ENCODE measurements at regions of chr9 and their contacts with region 1.

Region 1: GRCh38 chr9:133149126-133150107 is 14.3 kb downstream of the GBGT1 start:
- DNase-seq: peak; percentile 78 to 89 (median 81)
- H3K4me3 ChIP-seq: peak overlapping the region in 1 of 2 donors; percentile 67
- H3K4me3 Mint-ChIP-seq: peak overlapping the region; percentile 60 to 86 (median 80)
- H3K27ac ChIP-seq: peak overlapping the region; percentile 90
- H3K27ac Mint-ChIP-seq: peak overlapping the region; percentile 81 to 100 (median 87)
- H3K4me1 ChIP-seq: peaks cover 42% of the 10 kb centered on the region
- H3K4me1 Mint-ChIP-seq: peaks cover 14 to 43% (median 31%) of the 10 kb centered on the region in 4 donors
- H3K27me3 ChIP-seq: no peaks in the 10 kb centered on the region
- H3K27me3 Mint-ChIP-seq: no peaks in the 10 kb centered on the region

Region 2: GRCh38 chr9:132973713-132974112 is 175.7 kb before region 1 on chr9:
- CTCF ChIA-PET with region 1: interaction called, 3 read pairs
- POLR2A ChIA-PET with region 1: no interaction called
- intact Hi-C with region 1: loop called (anchors 2 kb)
- DNase-seq: peak in 1 of 5 donors; percentile 9
- H3K4me3 ChIP-seq: no peak overlapping the region
- H3K4me3 Mint-ChIP-seq: no peak overlapping the region
- H3K27ac ChIP-seq: no peak overlapping the region
- H3K27ac Mint-ChIP-seq: no peak overlapping the region
- H3K4me1 ChIP-seq: peaks cover 10% of the 10 kb centered on the region
- H3K4me1 Mint-ChIP-seq: peaks cover 4 to 11% (median 6%) of the 10 kb centered on the region in 4 donors
- H3K27me3 ChIP-seq: peaks cover 4% of the 10 kb centered on the region
- H3K27me3 Mint-ChIP-seq: peaks cover 15 to 25% of the 10 kb centered on the region in 2 donors

Region 3: DNA sequence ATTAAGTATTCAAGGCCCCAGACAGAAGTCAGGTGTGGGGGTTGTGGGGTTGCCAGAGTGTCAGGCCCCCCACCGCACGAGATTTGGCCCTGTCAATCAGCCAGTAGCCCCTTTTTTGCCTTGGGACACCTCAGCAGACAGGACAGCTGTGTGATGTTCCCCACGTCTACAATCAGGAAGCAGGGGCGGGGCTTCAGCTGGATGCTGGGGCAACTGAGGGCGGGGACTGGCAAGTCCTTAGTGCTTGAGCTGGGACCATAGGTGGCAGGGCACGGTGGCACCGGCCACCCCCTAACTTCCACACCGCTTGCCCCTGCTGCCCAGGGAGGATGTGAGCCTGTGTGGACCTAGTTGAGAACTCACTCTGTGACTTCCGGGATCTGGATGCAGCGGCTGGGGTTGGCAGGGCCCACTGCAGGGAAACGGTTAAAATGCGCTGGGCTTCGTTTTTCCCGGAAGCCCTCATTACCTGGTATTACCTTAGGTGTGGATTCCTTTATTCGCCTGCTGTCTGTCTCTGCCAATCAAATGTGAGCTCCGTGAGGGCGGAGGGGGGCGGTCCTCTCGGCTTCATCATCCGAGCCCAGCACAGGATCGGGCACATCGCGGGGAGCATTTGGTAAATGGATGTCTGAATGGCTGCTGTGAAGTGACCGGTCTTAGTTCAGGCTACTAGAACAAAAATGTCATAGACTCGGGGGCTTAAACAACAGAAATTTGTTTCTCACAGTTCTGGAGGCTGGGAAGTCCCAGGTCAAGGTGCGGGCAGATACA is 126.1 kb before region 1 on chr9:
- CTCF ChIA-PET with region 1: interaction called, 23 read pairs
- POLR2A ChIA-PET with region 1: interaction called, 8 read pairs
- intact Hi-C with region 1: loop called (anchors 1 kb)
- DNase-seq: peak in 4 of 5 donors; percentile 7 to 58 (median 14)
- H3K4me3 ChIP-seq: no peak overlapping the region
- H3K4me3 Mint-ChIP-seq: peak overlapping the region in 1 of 8 donors; percentile 54
- H3K27ac ChIP-seq: no peak overlapping the region
- H3K27ac Mint-ChIP-seq: peak overlapping the region in 2 of 7 donors; percentile 3 to 17
- H3K4me1 ChIP-seq: peaks cover 15% of the 10 kb centered on the region
- H3K4me1 Mint-ChIP-seq: peaks cover 4 to 22% (median 16%) of the 10 kb centered on the region in 4 donors
- H3K27me3 ChIP-seq: no peaks in the 10 kb centered on the region
- H3K27me3 Mint-ChIP-seq: peaks cover 1 to 3% of the 10 kb centered on the region in 2 donors

Region 4: DNA sequence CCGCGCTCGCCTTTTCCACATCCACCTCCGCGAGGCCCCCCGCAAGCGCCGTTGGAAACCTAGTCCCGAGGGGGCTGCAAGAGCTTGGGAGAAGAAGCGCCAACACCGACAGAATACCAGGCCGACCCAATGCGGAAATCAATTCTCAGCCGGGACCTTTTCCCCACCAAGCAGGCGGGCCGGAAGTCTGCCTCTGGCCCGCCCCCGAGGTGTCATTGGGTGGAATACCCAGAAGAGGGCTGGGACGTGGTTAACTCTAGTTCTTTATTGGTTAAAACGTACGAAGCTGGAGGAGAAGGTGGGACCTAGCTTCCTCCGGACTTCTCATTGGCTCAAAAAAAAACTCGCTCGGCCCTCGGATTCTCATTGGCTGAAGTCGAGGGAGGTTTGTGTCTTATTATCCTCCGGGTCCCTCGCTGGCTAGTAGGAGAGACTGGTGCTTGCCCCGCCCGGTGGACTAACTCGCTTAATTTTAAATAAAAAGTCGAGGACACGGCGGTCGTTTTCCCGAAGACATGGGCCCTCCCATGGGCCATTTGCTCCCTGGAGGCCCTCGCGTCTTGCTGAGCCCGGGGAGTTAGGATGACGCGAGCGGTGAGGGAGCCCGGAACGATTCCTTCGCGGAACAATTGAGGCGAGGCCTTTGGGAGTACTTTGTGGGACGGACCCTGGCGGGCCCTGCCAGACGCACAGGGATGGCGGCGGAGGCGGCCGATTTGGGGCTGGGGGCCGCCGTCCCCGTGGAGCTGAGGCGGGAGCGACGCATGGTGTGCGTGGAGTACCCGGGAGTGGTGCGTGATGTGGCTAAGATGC is 118.9 kb before region 1 on chr9 and contains the start of gene GTF3C5:
- CTCF ChIA-PET with region 1: interaction called, 17 read pairs
- POLR2A ChIA-PET with region 1: interaction called, 59 read pairs
- intact Hi-C with region 1: loop called (anchors 1 kb)
- DNase-seq: peak; percentile 94 to 97 (median 95)
- H3K4me3 ChIP-seq: peak within 1 kb of the TSS; percentile 84 to 97
- H3K4me3 Mint-ChIP-seq: peak within 1 kb of the TSS; percentile 93 to 99 (median 98)
- H3K27ac ChIP-seq: peak within 1 kb of the TSS; percentile 83
- H3K27ac Mint-ChIP-seq: peak within 1 kb of the TSS; percentile 94 to 99 (median 98)
- H3K4me1 ChIP-seq: peaks cover 27% of the 10 kb centered on the region
- H3K4me1 Mint-ChIP-seq: peaks cover 17 to 69% (median 47%) of the 10 kb centered on the region in 4 donors
- H3K27me3 ChIP-seq: no peaks in the 10 kb centered on the region
- H3K27me3 Mint-ChIP-seq: no peaks in the 10 kb centered on the region
- total RNA-seq, gene GTF3C5: 71.3 to 71.5 TPM

Region 5: DNA sequence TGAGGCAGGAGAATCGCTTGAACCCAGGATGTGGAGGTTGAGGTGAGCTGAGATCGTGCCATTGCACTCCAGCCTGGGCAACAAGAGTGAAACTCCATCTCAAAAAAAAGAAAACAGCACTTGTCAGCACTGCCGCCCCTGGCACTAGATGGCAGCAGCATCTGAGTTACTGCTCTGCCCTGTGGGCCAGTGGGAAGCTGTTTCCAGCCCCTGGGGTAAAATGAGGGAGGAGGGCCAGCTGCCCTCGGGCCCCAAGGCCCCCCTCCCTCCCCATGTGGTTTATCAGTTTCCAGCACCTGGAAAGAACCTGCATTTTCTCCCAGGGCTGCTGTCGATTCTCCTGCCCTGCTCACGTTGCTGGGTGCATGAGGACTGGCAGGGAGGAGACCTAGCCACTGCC is 100.8 kb before region 1 on chr9:
- CTCF ChIA-PET with region 1: interaction called, 5 read pairs
- POLR2A ChIA-PET with region 1: no interaction called
- intact Hi-C with region 1: loop called (anchors 1 kb)
- DNase-seq: peak in 4 of 5 donors; percentile 16 to 31 (median 28)
- H3K4me3 ChIP-seq: no peak overlapping the region
- H3K4me3 Mint-ChIP-seq: no peak overlapping the region
- H3K27ac ChIP-seq: no peak overlapping the region
- H3K27ac Mint-ChIP-seq: no peak overlapping the region
- H3K4me1 ChIP-seq: no peaks in the 10 kb centered on the region
- H3K4me1 Mint-ChIP-seq: peaks cover 0 to 4% (median 0%) of the 10 kb centered on the region in 4 donors
- H3K27me3 ChIP-seq: no peaks in the 10 kb centered on the region
- H3K27me3 Mint-ChIP-seq: no peaks in the 10 kb centered on the region

Region 6: DNA sequence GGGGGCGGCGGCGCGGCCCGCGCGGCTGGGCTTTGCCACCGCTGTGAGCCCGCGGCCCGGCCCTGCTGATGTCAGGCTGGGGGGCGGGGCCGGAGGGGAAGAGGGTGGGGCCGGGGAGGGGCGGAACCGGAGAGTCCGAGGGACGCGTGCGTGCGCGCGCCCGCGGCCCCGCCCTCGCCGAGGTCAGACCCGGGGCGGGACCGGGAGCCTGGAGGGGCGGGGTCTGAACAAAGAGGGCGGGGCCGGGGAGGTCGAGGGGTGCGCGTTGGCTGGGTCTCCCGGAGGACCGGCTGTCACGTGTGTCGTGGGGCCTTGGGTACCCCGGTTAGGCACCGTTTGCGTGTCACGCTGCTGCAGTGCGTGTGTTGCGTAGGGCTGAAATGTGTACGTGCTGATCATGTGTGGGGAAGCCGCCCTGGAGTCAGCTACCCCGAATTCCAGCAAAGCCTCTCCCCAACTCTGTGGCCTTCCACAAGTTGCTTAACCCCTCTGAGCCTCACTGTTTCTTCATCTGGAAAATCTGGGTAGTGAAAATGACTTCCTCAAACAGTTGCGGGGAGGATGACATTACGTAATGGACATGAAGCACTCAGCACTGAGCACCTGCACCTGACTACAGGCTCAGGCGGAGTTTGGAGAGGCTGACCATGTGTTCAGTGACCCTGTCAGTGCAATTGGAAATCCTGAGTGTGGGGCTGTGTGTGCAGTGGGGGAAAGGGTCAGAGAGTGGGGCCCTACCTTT is 28.0 kb before region 1 on chr9 and contains the start of gene RALGDS:
- CTCF ChIA-PET with region 1: interaction called, 596 read pairs
- POLR2A ChIA-PET with region 1: interaction called, 424 read pairs
- intact Hi-C with region 1: loop called (anchors 1 kb)
- DNase-seq: peak; percentile 85 to 91 (median 87)
- H3K4me3 ChIP-seq: peak within 1 kb of the TSS in 1 of 2 donors; percentile 55
- H3K4me3 Mint-ChIP-seq: peak within 1 kb of the TSS; percentile 69 to 84 (median 80)
- H3K27ac ChIP-seq: peak within 1 kb of the TSS; percentile 88
- H3K27ac Mint-ChIP-seq: peak within 1 kb of the TSS; percentile 95 to 100 (median 98)
- H3K4me1 ChIP-seq: peaks cover 93% of the 10 kb centered on the region
- H3K4me1 Mint-ChIP-seq: peaks cover 36 to 86% (median 64%) of the 10 kb centered on the region in 4 donors
- H3K27me3 ChIP-seq: no peaks in the 10 kb centered on the region
- H3K27me3 Mint-ChIP-seq: no peaks in the 10 kb centered on the region
- total RNA-seq, gene RALGDS: 123 to 131 TPM

Region 7: DNA sequence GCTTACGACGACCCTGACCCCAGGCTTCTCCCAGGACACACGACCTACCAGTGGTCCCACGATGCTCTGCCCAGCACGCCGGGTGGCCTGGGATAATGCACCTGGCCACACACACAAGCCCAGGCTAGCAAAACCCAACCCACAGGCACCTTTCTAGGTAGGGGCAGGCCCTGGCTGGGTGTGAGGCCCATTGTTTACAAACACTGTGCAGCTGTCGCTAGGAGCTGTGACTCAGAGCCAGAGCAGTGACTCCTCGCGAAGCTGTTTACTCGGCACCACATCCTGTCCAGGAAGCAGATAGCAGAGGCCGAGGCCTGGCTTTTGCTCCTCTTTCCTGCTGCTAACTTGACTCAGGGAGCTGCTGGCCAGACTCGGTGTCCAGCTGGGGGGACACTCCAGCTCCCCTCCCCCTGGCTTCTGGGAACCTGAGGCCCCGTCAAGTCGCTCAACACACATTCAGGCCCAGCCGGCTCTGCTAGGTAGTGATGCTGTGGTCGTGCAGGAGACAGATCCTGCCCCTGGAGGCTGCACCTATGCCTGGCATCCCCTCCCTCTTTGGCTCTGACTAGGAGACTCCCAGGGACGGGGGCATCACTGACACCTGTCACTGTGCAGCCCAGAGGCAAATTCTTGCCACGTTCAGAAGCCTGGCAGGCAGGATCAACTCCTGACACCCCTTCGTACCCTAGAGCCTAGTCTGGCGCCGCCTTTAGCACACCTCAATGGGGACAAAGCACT is 15.6 kb before region 1 on chr9:
- CTCF ChIA-PET with region 1: interaction called, 282 read pairs
- POLR2A ChIA-PET with region 1: interaction called, 424 read pairs
- intact Hi-C with region 1: no loop called
- DNase-seq: peak; percentile 90 to 98 (median 95)
- H3K4me3 ChIP-seq: peak overlapping the region in 1 of 2 donors; percentile 33
- H3K4me3 Mint-ChIP-seq: peak overlapping the region; percentile 75 to 99 (median 88)
- H3K27ac ChIP-seq: peak overlapping the region; percentile 100
- H3K27ac Mint-ChIP-seq: peak overlapping the region; percentile 100
- H3K4me1 ChIP-seq: peaks cover 99% of the 10 kb centered on the region
- H3K4me1 Mint-ChIP-seq: peaks cover 42 to 93% (median 68%) of the 10 kb centered on the region in 4 donors
- H3K27me3 ChIP-seq: no peaks in the 10 kb centered on the region
- H3K27me3 Mint-ChIP-seq: no peaks in the 10 kb centered on the region

Region 8: GRCh38 chr9:133826289-133827085 is 677.1 kb after region 1 on chr9:
- CTCF ChIA-PET with region 1: no interaction called
- POLR2A ChIA-PET with region 1: no interaction called
- intact Hi-C with region 1: no loop called
- DNase-seq: no peak
- H3K4me3 ChIP-seq: no peak overlapping the region
- H3K4me3 Mint-ChIP-seq: no peak overlapping the region
- H3K27ac ChIP-seq: no peak overlapping the region
- H3K27ac Mint-ChIP-seq: no peak overlapping the region
- H3K4me1 ChIP-seq: no peaks in the 10 kb centered on the region
- H3K4me1 Mint-ChIP-seq: no peaks in the 10 kb centered on the region
- H3K27me3 ChIP-seq: no peaks in the 10 kb centered on the region
- H3K27me3 Mint-ChIP-seq: no peaks in the 10 kb centered on the region